ENCODE measurements at regions of chrX and their contacts with region 1.

Region 1: GRCh38 chrX:29470030-29470429 is 745.3 kb upstream of the MAGEB2 start:
- DNase-seq: peak; percentile 71
- H3K4me3 Mint-ChIP-seq: no peak overlapping the region
- H3K27ac Mint-ChIP-seq: peak overlapping the region; percentile 60
- H3K4me1 Mint-ChIP-seq: peaks cover 8% of the 10 kb centered on the region
- H3K27me3 Mint-ChIP-seq: peaks cover 16% of the 10 kb centered on the region
- CTCF ChIP-seq: no peak

Region 2: GRCh38 chrX:29662759-29663503 is 192.9 kb after region 1 on chrX:
- CTCF ChIA-PET with region 1: no interaction called
- POLR2A ChIA-PET with region 1: no interaction called
- intact Hi-C with region 1: loop called (anchors 2 kb)
- DNase-seq: peak; percentile 97
- H3K4me3 Mint-ChIP-seq: peak overlapping the region; percentile 30
- H3K27ac Mint-ChIP-seq: peak overlapping the region; percentile 55
- H3K4me1 Mint-ChIP-seq: peaks cover 17% of the 10 kb centered on the region
- H3K27me3 Mint-ChIP-seq: peaks cover 10% of the 10 kb centered on the region
- CTCF ChIP-seq: no peak

Measured in MCF 10A (cell line).